K562 (cell line): ENCODE measurements at regions of chr20 and their contacts with region 1.

Region 1: GRCh38 chr20:48875911-48876640 is 45.4 kb upstream of the ARFGEF2 start:
- DNase-seq: peak in 3 of 4 experiments; percentile 22 to 38 (median 33)
- ATAC-seq: peak; percentile 59
- H3K4me3 ChIP-seq: no peak overlapping the region
- H3K27ac ChIP-seq: no peak overlapping the region
- H3K4me1 ChIP-seq: peaks cover 3 to 18% of the 10 kb centered on the region in 2 experiments; a peak in 3 of 5 replicates
- H3K27me3 ChIP-seq: no peaks in the 10 kb centered on the region
- CTCF ChIP-seq: no peak
- EP300 ChIP-seq: no peak
- POLR2A ChIP-seq: no peak
- RAD21 ChIP-seq: no peak

Region 2: DNA sequence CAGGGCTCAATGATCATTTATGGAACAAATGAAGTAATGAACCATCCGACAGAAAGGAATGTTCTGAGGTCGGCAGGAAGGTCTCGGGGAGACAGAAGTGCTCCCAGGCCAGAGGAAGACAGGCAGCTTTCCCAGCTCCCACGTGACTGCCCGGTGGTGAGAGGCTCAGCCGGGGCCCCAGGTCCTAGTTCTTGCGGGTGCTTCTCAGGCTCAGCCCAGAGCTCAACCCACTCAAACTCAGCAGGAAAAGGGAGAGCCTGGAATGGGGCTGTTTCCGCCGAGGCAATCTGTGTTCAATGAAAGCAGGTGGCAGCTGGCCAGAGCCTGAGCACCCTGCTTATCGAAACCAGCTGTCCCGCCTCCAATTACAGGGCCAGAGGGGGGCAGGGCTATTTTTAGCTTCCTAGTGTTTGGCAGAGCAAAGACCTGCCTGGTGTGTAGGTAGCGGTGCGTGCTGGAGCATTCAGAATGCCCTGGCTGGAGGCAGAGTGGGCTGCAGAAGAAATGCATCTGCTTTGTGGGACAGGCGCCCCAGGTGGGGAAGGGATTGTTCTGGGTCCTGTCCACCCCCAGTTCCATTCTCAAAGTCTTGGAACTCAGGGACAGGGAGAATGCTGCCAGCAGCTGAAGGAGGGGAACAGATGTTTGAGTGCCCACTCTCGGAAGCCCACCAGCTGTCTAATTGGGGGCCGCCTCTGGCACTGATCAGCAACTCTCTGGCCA is 193.4 kb before region 1 on chr20:
- CTCF ChIA-PET with region 1: no interaction called
- POLR2A ChIA-PET with region 1: no interaction called
- in situ Hi-C with region 1: no loop called
- intact Hi-C with region 1: no loop called
- DNase-seq: peak; percentile 68 to 81 (median 72)
- ATAC-seq: peak; percentile 68
- H3K4me3 ChIP-seq: no peak overlapping the region
- H3K27ac ChIP-seq: no peak overlapping the region
- H3K4me1 ChIP-seq: peaks cover 21 to 32% of the 10 kb centered on the region in 2 experiments
- H3K27me3 ChIP-seq: no peaks in the 10 kb centered on the region; a peak in 1 of 5 replicates
- CTCF ChIP-seq: no peak
- EP300 ChIP-seq: no peak; the same call in 1 of the 2 replicates
- POLR2A ChIP-seq: no peak
- RAD21 ChIP-seq: no peak

Region 3: GRCh38 chr20:48886185-48886584 is 10.1 kb after region 1 on chr20:
- CTCF ChIA-PET with region 1: no interaction called
- POLR2A ChIA-PET with region 1: interaction called, 13 read pairs
- in situ Hi-C with region 1: no loop called
- intact Hi-C with region 1: no loop called
- DNase-seq: no peak
- ATAC-seq: peak; percentile 30
- H3K4me3 ChIP-seq: no peak overlapping the region
- H3K27ac ChIP-seq: no peak overlapping the region
- H3K4me1 ChIP-seq: peaks cover 0 to 8% of the 10 kb centered on the region in 2 experiments; a peak in 2 of 5 replicates
- H3K27me3 ChIP-seq: no peaks in the 10 kb centered on the region
- CTCF ChIP-seq: no peak
- EP300 ChIP-seq: no peak
- POLR2A ChIP-seq: no peak
- RAD21 ChIP-seq: no peak

Region 4: GRCh38 chr20:48930035-48930434 is 54.0 kb after region 1 on chr20:
- CTCF ChIA-PET with region 1: no interaction called
- POLR2A ChIA-PET with region 1: no interaction called
- in situ Hi-C with region 1: no loop called
- intact Hi-C with region 1: no loop called
- DNase-seq: peak in 1 of 4 experiments; percentile 46
- ATAC-seq: peak; percentile 59
- H3K4me3 ChIP-seq: no peak overlapping the region
- H3K27ac ChIP-seq: no peak overlapping the region
- H3K4me1 ChIP-seq: peaks cover 22 to 31% of the 10 kb centered on the region in 2 experiments
- H3K27me3 ChIP-seq: no peaks in the 10 kb centered on the region
- CTCF ChIP-seq: no peak
- EP300 ChIP-seq: no peak
- POLR2A ChIP-seq: no peak
- RAD21 ChIP-seq: no peak

Region 5: DNA sequence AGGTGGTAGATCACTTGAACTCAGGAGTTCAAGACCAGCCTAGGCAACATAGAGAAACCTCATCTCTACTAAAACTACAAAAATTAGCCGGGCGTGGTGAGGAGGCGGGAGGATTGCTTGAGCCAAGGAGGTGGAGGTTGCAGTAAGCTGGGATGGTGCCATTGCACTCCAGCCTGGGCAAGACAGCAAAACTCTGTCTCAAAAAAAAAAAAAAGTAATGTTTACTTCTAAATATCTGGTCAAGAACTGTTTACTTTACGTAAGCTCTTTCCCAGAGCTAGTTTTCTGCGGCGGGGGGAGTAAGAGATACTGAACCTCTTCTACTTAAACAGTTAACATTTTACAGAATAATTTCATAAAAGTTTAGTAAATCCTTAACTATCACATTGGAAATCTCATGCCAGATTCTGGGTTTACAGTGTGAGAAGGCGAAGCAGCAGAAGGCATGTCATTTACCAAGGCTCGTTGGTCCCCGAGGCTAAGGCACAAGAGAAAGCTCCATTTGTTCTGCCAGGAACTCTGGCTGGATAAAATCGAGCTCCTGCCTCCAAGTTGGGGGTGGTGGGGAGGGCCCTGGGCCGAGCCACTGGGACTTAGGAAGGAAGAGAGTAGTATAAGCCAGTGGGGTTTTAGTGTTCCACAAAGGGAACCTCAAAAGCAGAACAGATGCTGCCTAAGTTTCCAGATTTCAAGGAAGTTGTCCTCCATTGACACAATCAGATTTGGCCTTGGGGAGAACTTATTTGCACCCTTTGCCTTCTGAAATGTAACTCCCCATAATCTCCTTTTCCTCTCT is 87.1 kb after region 1 on chr20:
- CTCF ChIA-PET with region 1: no interaction called
- POLR2A ChIA-PET with region 1: no interaction called
- in situ Hi-C with region 1: no loop called
- intact Hi-C with region 1: no loop called
- DNase-seq: no peak
- ATAC-seq: no peak
- H3K4me3 ChIP-seq: no peak overlapping the region
- H3K27ac ChIP-seq: no peak overlapping the region
- H3K4me1 ChIP-seq: no peaks in the 10 kb centered on the region
- H3K27me3 ChIP-seq: no peaks in the 10 kb centered on the region
- CTCF ChIP-seq: no peak
- EP300 ChIP-seq: no peak
- POLR2A ChIP-seq: no peak
- RAD21 ChIP-seq: no peak

Region 6: DNA sequence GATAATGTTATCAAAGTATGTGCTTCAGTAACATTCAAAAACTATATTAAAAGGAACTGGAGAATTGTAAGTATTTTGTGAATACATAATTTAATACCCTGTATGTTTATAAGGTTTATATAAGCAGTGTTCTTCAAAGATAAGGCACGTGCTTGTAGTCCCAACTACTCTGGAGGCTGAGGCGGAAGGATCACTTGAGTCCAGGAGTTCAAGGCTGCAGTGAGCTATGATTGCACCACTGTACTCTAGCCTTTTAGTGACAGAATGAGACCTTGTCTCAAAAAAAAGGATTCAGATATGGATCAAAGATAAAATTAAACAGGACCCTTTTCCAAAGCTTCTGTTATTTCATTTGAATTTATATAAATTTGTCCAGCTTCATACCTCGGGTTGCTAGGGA is 187.2 kb after region 1 on chr20:
- CTCF ChIA-PET with region 1: no interaction called
- POLR2A ChIA-PET with region 1: no interaction called
- in situ Hi-C with region 1: no loop called
- intact Hi-C with region 1: no loop called
- DNase-seq: no peak
- ATAC-seq: no peak
- H3K4me3 ChIP-seq: no peak overlapping the region
- H3K27ac ChIP-seq: no peak overlapping the region
- H3K4me1 ChIP-seq: no peaks in the 10 kb centered on the region
- H3K27me3 ChIP-seq: no peaks in the 10 kb centered on the region
- CTCF ChIP-seq: no peak
- EP300 ChIP-seq: no peak
- POLR2A ChIP-seq: no peak
- RAD21 ChIP-seq: no peak